Activated CD4-positive, alpha-beta T cell treated with anti-CD3 and anti-CD28 coated beads for 36 hours (primary cell): ENCODE measurements at regions of chrX and their contacts with region 1.

Region 1: GRCh38 chrX:130120746-130121504 is 10.6 kb upstream of the ELF4 start:
- DNase-seq: peak; percentile 81
- ATAC-seq: peak; percentile 88
- H3K4me3 Mint-ChIP-seq: peak overlapping the region; percentile 57
- H3K27ac Mint-ChIP-seq: peak overlapping the region; percentile 60
- H3K4me1 Mint-ChIP-seq: peaks cover 19% of the 10 kb centered on the region
- H3K27me3 Mint-ChIP-seq: no peaks in the 10 kb centered on the region

Region 2: GRCh38 chrX:129593137-129593536 is 527.8 kb before region 1 on chrX:
- CTCF ChIA-PET with region 1: no interaction called
- POLR2A ChIA-PET with region 1: no interaction called
- intact Hi-C with region 1: no loop called
- DNase-seq: no peak
- ATAC-seq: no peak
- H3K4me3 Mint-ChIP-seq: no peak overlapping the region
- H3K27ac Mint-ChIP-seq: no peak overlapping the region
- H3K4me1 Mint-ChIP-seq: no peaks in the 10 kb centered on the region
- H3K27me3 Mint-ChIP-seq: no peaks in the 10 kb centered on the region

Region 3: DNA sequence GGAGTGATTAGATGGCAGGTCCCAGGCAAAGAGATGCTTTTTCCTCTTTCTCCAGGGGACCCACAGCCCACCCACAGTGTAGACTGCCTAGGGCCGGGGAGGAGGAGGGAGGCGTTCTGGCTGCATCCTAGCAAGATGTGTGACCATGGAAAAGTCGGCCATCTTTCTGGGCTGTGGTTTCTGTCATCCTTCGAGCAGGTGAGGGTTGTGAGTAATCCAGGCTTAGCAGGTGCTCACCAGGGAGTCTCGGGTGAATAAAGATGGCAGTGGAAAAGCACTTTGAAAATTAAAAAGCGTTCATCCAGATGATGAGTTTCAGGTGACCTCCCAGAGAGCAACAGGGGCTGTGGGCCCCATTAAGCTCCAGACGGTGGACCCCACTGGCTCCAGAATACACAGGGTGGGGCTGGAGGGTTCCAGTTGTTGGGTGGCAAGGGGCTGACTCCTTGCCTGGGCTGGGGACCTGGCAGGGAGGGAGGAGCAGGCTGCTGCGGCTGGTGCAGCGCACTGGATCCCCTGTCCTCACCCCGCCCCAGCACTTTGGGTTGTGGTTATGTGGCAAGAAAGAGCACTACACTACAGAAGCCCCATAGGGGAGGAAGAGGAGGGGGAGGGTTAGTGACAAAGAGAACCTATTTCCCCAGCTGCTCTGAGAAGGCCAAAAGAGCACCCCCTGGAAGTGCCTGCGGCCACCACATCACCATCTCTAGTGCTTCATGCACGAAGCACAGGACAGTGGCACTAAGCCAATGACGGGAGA is 34.3 kb before region 1 on chrX:
- CTCF ChIA-PET with region 1: interaction called, 67 read pairs
- POLR2A ChIA-PET with region 1: interaction called, 5 read pairs
- intact Hi-C with region 1: loop called (anchors 1 to 2 kb)
- DNase-seq: peak; percentile 85
- ATAC-seq: peak; percentile 53
- H3K4me3 Mint-ChIP-seq: peak overlapping the region; percentile 74
- H3K27ac Mint-ChIP-seq: peak overlapping the region; percentile 94
- H3K4me1 Mint-ChIP-seq: peaks cover 82% of the 10 kb centered on the region
- H3K27me3 Mint-ChIP-seq: no peaks in the 10 kb centered on the region